ENCODE measurements at regions of chr7 and their contacts with region 1.

Region 1: GRCh38 chr7:118288098-118288497 is 63.6 kb downstream of the ANKRD7 start:
- DNase-seq: peak in 2 of 9 experiments; percentile 24 to 45
- ATAC-seq: no peak
- H3K4me3 ChIP-seq: no peak overlapping the region
- H3K4me3 Mint-ChIP-seq: peak overlapping the region; percentile 26
- H3K27ac ChIP-seq: no peak overlapping the region
- H3K27ac Mint-ChIP-seq: no peak overlapping the region
- H3K4me1 ChIP-seq: peaks cover 14% of the 10 kb centered on the region
- H3K4me1 Mint-ChIP-seq: peaks cover 19% of the 10 kb centered on the region
- H3K27me3 ChIP-seq: peaks cover 6 to 11% of the 10 kb centered on the region in 2 experiments
- H3K27me3 Mint-ChIP-seq: peaks cover 49% of the 10 kb centered on the region
- CTCF ChIP-seq: no peak

Region 2: DNA sequence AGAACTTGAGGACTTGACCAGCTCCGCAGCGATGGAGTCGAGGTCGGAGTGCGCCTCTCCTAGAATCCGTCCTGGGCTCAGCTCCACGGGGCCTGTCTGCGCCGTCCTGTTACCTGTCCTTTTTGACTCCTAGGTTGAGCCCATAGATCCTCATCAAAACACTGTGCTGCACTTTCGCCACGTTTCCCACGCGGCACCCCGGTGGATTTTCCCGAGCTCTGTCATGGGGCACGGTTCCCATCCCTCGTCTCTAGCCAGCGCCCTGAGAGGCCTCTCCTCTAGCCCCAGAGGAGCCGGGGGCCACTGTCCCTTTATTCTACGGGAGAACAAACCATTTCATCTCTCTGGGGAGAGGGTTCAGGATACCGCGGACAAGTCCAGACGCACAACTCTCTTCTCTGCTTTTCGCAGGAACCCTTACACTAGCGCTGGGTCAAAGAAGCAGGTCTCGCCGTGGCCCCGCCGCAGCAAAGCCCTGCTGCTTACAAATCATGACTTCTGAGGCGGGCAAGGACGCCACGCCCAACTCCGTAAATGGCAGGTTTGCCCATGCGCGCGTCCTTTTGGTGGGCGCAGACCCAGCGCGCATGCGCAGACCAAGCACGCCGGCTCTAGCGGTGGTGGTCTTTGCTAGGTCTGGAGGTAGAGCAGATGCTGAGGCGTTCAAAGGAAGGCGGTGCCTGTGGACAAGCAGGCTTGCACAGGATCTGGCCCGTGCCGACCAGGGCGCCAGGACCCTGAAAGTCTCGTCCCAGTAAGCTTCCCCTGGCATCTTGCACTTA is 73.9 kb before region 1 on chr7:
- CTCF ChIA-PET with region 1: no interaction called
- POLR2A ChIA-PET with region 1: no interaction called
- intact Hi-C with region 1: no loop called
- DNase-seq: peak; percentile 63 to 91 (median 81)
- ATAC-seq: peak; percentile 96
- H3K4me3 ChIP-seq: peak overlapping the region; percentile 55 to 58
- H3K4me3 Mint-ChIP-seq: peak overlapping the region; percentile 94
- H3K27ac ChIP-seq: peak overlapping the region in 1 of 2 experiments; percentile 31
- H3K27ac Mint-ChIP-seq: peak overlapping the region; percentile 87
- H3K4me1 ChIP-seq: peaks cover 5% of the 10 kb centered on the region
- H3K4me1 Mint-ChIP-seq: peaks cover 18% of the 10 kb centered on the region
- H3K27me3 ChIP-seq: no peaks in the 10 kb centered on the region
- H3K27me3 Mint-ChIP-seq: peaks cover 2% of the 10 kb centered on the region
- CTCF ChIP-seq: no peak

Region 3: DNA sequence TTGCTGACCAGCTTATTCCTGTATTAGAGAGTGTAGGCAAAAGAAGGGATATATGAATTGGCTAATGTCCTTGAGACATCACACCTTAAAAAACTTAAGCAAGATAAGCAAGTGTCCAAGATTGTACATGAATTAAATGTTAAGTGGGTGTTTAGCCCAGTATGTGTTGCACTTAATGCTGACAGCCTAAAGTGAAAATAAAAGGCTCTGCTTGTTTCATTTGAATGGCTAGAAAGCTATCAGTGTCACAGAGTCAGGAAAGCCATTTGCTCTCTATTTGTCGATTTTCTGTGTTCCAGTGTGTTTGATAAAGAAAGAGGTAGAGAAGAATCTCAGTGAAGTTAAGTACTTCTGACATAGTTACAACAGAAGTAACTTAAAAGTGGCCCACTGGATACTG is 681.3 kb after region 1 on chr7:
- CTCF ChIA-PET with region 1: no interaction called
- POLR2A ChIA-PET with region 1: no interaction called
- intact Hi-C with region 1: loop called in 1 of 2 experiments (anchors 5 kb)
- DNase-seq: no peak
- ATAC-seq: no peak
- H3K4me3 ChIP-seq: no peak overlapping the region
- H3K4me3 Mint-ChIP-seq: no peak overlapping the region
- H3K27ac ChIP-seq: no peak overlapping the region
- H3K27ac Mint-ChIP-seq: no peak overlapping the region
- H3K4me1 ChIP-seq: no peaks in the 10 kb centered on the region
- H3K4me1 Mint-ChIP-seq: no peaks in the 10 kb centered on the region
- H3K27me3 ChIP-seq: no peaks in the 10 kb centered on the region
- H3K27me3 Mint-ChIP-seq: no peaks in the 10 kb centered on the region
- CTCF ChIP-seq: no peak